ENCODE measurements at regions of chr11 and their contacts with region 1.

Region 1: GRCh38 chr11:45655347-45655756 is 10.1 kb downstream of the CHST1 start:
- DNase-seq: peak; percentile 83
- ATAC-seq: peak; percentile 68

Region 2: DNA sequence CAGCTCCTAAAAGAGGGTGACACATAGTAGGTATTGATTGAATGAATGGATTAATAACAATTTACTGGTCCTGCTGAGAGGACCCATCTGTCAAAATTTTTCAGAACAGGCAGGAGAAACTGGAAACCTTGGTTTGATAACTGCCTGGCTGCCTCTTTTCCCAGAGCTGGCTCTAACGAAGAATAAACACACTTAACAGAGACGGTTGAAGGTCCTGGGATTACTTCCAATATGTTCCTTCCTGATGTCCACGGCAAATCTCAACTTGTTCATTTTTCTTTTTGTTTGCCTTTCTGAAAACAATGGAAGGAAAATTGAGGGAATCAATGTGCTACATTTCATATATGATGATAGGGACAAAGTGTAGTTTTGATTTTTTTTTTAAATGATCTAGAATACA is 292.7 kb before region 1 on chr11:
- intact Hi-C with region 1: loop called (anchors 5 kb)
- DNase-seq: no peak
- ATAC-seq: no peak

Region 3: DNA sequence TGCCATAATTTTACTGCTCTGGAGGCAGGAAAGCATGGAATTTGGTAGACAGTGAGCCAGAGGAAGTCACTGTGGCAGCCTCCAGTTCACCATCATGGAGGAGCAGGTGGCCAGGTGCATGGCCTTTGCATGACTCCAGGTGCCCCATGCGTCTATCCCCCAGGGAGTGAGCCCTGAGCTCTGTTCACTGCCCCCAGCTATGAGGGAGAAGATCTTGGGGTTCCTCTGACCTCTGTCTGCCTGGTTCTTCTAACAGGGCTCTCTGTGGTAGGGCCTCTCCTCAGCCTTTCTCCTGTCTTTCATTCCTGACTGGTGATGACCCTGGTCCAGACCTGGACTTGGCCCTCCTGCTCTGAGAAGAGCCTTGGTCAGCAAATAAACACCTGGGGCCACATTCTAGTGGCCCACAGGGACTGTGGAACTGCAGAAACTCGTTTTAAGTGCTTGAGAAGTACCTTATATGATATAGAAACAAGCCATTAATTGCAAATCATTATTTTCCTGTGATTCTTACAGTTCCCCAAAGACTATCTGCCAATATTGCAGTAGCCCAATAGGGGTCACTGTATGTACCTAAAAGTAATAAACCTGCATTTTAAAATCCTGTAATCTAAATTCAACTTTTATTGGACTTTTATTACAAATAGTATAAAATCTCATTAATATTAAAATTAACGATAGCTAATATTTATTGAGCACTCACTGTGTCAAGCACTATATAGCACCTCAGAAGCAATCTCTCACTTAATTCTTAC is 249.3 kb before region 1 on chr11:
- intact Hi-C with region 1: loop called (anchors 5 kb)
- DNase-seq: no peak
- ATAC-seq: no peak

Region 4: GRCh38 chr11:45538363-45538762 is 117.0 kb before region 1 on chr11:
- intact Hi-C with region 1: loop called (anchors 5 kb)
- DNase-seq: no peak
- ATAC-seq: peak; percentile 88

Region 5: GRCh38 chr11:45606514-45607281 is 48.7 kb before region 1 on chr11:
- intact Hi-C with region 1: loop called (anchors 5 kb)
- DNase-seq: no peak
- ATAC-seq: no peak

Region 6: DNA sequence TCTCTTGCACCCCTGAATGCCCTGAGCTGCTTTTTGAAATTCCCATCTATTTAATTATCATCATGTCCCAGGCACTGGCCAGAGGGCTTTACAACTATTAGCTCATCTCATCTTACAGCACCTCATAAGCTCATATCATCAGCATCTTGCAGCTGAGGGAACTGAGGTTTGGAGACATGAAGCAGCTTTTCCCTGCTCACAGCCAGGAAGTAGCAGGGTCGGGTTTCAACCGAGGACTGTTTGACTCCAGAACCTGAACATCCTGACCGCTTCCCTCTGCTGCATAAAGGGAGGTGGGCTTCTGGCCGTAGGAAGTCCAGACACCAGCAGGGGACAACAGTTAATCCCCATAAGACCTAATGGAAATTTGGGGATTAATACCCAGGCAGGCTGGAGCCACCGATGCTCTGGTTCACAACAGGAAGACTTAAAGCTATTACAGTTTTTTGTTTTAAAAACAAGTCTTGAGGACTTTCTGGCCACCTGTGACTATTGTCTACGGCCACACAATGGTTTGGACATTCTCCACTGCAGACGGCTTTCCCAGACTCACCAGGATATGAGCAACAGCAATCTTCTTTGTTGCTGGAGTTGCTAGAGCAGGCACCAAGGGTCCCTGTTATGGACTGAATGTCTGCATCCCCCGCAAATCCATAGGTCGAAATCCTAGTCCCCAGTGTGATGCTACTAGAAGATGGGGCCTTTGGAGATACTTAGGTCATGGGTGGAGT is 37.3 kb before region 1 on chr11:
- intact Hi-C with region 1: no loop called
- DNase-seq: no peak
- ATAC-seq: no peak

Region 7: DNA sequence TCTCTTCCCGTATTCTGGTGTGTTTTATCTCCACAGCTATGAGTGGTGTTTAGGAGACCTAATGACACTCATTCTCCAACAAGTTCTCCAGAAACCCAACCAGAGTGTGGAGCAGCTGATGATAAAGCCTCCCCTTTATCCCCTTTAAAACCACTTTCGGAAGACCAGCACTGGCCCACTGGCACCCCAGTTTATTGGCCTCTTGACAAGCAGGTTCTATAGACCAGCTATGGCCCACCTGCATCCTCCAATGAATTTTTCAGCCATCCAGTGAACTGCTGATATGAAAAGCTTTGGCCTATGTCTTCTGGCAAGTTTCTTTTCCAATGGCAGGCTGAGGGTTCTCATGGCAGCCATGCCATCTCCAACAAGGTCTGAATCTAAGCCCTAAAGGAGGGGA is 17.3 kb before region 1 on chr11:
- intact Hi-C with region 1: no loop called
- DNase-seq: no peak
- ATAC-seq: no peak

Measured in Right ventricle myocardium inferior (tissue), 1 donor.